Calu3 (cell line): ENCODE measurements at regions of chr20 and their contacts with region 1.

Region 1: GRCh38 chr20:13784893-13785715 is at the starts of genes ESF1 and NDUFAF5:
- DNase-seq: peak; percentile 84
- H3K4me3 Mint-ChIP-seq: peak within 1 kb of the TSS; percentile 98
- H3K27ac Mint-ChIP-seq: peak within 1 kb of the TSS; percentile 98
- H3K4me1 Mint-ChIP-seq: peaks cover 20% of the 10 kb centered on the region
- H3K27me3 Mint-ChIP-seq: no peaks in the 10 kb centered on the region
- CTCF ChIP-seq: no peak
- total RNA-seq, gene ESF1: 14.7 and 15.1 TPM in 2 replicates
- total RNA-seq, gene NDUFAF5: 12.8 and 16.3 TPM in 2 replicates

Region 2: DNA sequence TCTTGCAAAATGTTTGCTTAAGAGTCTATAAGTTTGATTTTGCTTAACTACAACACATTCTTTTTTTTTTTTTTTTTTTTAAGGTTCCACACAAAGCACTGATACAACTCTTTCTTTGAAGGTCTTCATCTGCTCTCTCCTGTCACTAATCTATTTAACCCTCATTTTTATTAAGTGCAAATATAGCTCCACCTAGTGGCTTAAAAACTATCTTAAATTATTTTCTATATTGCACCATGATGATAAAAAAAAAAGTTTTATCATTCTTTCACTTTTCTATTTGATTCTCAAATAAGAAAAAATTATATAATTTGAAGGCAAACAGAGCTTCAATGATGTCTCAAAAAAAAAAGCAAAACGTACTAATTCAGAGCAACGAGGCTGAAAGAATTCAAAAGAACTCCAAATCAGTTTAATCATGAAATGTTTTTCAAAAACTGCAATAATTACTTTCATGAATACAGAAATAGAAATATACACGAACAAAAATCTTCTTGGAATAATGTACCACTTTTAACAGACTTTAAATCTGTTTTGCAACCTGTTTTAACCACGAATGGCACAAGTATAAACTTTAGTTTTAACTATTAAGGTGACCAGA is 13.2 kb before region 1 on chr20:
- CTCF ChIA-PET with region 1: interaction called, 10 read pairs
- intact Hi-C with region 1: no loop called
- DNase-seq: no peak
- H3K4me3 Mint-ChIP-seq: no peak overlapping the region
- H3K27ac Mint-ChIP-seq: no peak overlapping the region
- H3K4me1 Mint-ChIP-seq: peaks cover 3% of the 10 kb centered on the region
- H3K27me3 Mint-ChIP-seq: no peaks in the 10 kb centered on the region
- CTCF ChIP-seq: no peak